Activated CD8-positive, alpha-beta T cell treated with anti-CD3 and anti-CD28 coated beads for 36 hours (primary cell): ENCODE measurements at regions of chr9 and their contacts with region 1.

Region 1: GRCh38 chr9:129737479-129738274 is 15.2 kb downstream of the PTGES start:
- DNase-seq: peak; percentile 89
- ATAC-seq: peak; percentile 89
- H3K4me3 Mint-ChIP-seq: peak overlapping the region; percentile 55
- H3K27ac Mint-ChIP-seq: peak overlapping the region; percentile 52
- H3K4me1 Mint-ChIP-seq: peaks cover 11% of the 10 kb centered on the region
- H3K27me3 Mint-ChIP-seq: no peaks in the 10 kb centered on the region
- CTCF ChIP-seq: peak; percentile 99

Region 2: GRCh38 chr9:129696938-129697650 is 40.6 kb before region 1 on chr9:
- CTCF ChIA-PET with region 1: interaction called, 13 read pairs
- POLR2A ChIA-PET with region 1: no interaction called
- intact Hi-C with region 1: no loop called
- DNase-seq: peak; percentile 36
- ATAC-seq: peak; percentile 66
- H3K4me3 Mint-ChIP-seq: peak overlapping the region; percentile 49
- H3K27ac Mint-ChIP-seq: peak overlapping the region; percentile 81
- H3K4me1 Mint-ChIP-seq: peaks cover 5% of the 10 kb centered on the region
- H3K27me3 Mint-ChIP-seq: peaks cover 31% of the 10 kb centered on the region
- CTCF ChIP-seq: no peak

Region 3: DNA sequence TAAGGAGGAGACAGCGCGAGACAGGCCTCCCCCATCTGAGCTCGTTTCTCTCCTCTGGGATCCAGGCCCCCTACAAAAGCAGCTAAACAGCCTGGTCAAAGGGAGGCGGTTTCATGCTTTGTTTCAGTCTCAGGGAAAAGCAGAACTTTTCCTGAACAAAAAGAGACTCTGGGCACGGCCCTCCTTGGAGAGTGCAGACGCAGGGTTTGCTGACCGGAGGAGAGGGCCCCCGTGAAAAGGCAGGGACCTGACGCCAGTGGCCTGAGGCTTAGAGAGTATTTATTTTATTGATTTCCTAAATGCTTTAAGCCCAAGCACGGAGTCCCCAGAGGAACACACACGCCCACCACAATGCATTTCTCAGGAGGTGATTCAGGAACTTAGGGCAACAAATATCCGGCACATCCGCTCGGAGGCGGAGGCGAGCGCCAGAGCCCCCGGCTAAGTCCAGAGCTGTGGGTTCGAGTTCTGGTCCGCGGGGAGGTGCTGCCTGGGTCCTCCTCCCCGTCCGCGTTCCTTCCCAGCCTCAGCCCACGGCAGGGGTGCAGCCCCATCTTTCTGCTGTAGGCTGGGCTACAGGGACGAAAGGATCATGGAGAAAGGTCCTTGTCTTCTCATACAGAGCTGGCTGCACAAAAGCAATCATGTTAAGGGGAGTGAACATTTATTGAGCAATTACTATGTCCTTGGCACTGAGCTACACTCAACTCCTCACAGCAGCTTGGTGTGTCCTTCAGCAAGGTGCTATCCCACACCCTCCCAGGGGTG is 24.9 kb before region 1 on chr9:
- CTCF ChIA-PET with region 1: interaction called, 10 read pairs
- POLR2A ChIA-PET with region 1: no interaction called
- intact Hi-C with region 1: no loop called
- DNase-seq: peak; percentile 49
- ATAC-seq: peak; percentile 56
- H3K4me3 Mint-ChIP-seq: no peak overlapping the region
- H3K27ac Mint-ChIP-seq: no peak overlapping the region
- H3K4me1 Mint-ChIP-seq: peaks cover 20% of the 10 kb centered on the region
- H3K27me3 Mint-ChIP-seq: peaks cover 6% of the 10 kb centered on the region
- CTCF ChIP-seq: no peak

Region 4: GRCh38 chr9:129751826-129752801 is 14.4 kb after region 1 on chr9:
- CTCF ChIA-PET with region 1: interaction called, 29 read pairs
- POLR2A ChIA-PET with region 1: interaction called, 3 read pairs
- intact Hi-C with region 1: no loop called
- DNase-seq: no peak
- ATAC-seq: peak; percentile 11
- H3K4me3 Mint-ChIP-seq: peak overlapping the region; percentile 26
- H3K27ac Mint-ChIP-seq: no peak overlapping the region
- H3K4me1 Mint-ChIP-seq: peaks cover 14% of the 10 kb centered on the region
- H3K27me3 Mint-ChIP-seq: peaks cover 6% of the 10 kb centered on the region
- CTCF ChIP-seq: no peak

Region 5: DNA sequence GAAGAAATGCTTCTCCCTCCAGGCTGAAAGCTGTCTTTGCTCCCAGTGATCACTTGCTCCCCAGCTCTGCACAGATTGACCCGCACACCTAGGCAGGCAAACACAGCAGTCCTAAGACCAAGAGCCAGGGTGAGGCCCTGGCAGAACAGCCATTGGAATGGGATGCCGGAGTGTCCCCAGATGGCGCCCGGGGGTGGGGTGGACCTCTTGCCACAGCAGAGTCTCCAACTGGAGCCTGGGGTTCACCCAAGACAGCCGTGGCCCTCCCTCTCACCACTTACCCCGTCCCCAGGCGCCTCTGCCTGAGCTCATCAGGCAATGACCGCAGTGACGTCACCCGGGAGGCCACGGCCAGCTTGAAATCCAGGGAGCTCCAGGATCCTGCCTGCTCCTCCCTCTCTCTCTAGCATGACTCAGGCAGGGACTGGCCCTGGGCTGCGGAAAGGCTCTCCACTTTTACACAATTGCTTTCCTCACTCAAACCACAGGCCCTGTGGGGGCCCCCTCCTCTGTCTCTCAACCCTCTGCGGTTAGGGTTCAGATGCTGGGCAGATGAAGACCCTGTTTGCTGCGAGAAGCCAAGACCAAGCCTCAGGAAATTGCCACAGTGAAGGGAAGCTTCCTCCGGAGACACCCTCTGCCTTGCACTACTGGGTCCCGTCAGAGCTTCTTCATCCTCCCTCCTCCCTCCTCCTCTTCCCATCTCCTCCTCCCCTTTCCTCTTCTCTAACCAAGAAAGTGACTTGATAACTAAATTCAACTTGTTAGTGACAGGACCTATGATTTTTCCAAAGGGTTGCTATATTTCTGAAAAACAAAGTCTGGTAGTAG is 39.5 kb after region 1 on chr9:
- CTCF ChIA-PET with region 1: interaction called, 82 read pairs
- POLR2A ChIA-PET with region 1: interaction called, 5 read pairs
- intact Hi-C with region 1: no loop called
- DNase-seq: peak; percentile 91
- ATAC-seq: peak; percentile 83
- H3K4me3 Mint-ChIP-seq: no peak overlapping the region
- H3K27ac Mint-ChIP-seq: no peak overlapping the region
- H3K4me1 Mint-ChIP-seq: peaks cover 15% of the 10 kb centered on the region
- H3K27me3 Mint-ChIP-seq: peaks cover 6% of the 10 kb centered on the region
- CTCF ChIP-seq: no peak

Region 6: GRCh38 chr9:129783516-129784361 is 46.1 kb after region 1 on chr9:
- CTCF ChIA-PET with region 1: interaction called, 82 read pairs
- POLR2A ChIA-PET with region 1: interaction called, 4 read pairs
- intact Hi-C with region 1: loop called (anchors 2 kb)
- DNase-seq: peak; percentile 79
- ATAC-seq: peak; percentile 99
- H3K4me3 Mint-ChIP-seq: no peak overlapping the region
- H3K27ac Mint-ChIP-seq: no peak overlapping the region
- H3K4me1 Mint-ChIP-seq: peaks cover 2% of the 10 kb centered on the region
- H3K27me3 Mint-ChIP-seq: no peaks in the 10 kb centered on the region
- CTCF ChIP-seq: peak; percentile 92

Region 7: DNA sequence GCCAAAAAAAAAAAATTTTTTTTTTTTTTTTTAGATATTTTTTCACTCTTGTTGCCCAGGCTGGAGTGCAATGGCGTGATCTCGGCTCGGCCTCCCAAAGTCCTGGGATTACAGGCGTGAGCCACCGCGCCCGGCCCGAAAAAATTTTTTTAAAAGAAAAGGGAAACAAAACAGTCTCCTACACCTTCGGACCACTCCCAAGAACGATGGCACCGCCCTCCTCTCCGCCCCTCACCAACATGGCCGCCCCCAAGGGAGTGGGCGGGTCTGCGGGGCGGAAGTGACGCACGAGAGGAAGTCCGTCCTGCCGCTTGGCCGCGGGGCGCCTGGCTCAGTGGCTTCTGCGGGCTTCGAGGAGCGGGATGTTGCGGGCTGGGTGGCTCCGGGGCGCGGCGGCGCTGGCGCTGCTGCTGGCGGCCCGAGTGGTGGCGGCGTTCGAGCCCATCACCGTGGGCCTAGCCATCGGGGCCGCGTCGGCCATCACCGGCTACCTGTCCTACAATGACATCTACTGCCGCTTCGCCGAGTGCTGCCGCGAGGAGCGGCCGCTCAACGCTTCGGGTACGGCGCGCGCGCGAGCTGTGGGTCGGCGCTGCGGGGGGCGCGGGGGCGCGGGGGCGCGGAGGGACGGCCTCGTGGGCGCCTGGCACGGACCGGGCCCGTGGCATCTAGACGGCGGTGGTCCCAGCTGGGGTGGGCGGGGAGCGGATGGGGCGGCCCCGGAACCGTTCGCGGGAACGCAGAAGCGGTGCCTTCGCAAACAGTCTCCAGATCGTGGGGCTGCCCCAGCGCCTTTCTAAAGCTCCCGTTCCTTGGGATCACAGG is 65.4 kb after region 1 on chr9 and contains the start of gene TOR1B:
- CTCF ChIA-PET with region 1: no interaction called
- POLR2A ChIA-PET with region 1: no interaction called
- intact Hi-C with region 1: no loop called
- DNase-seq: peak; percentile 96
- ATAC-seq: peak; percentile 94
- H3K4me3 Mint-ChIP-seq: peak within 1 kb of the TSS; percentile 83
- H3K27ac Mint-ChIP-seq: peak within 1 kb of the TSS; percentile 91
- H3K4me1 Mint-ChIP-seq: peaks cover 24% of the 10 kb centered on the region
- H3K27me3 Mint-ChIP-seq: no peaks in the 10 kb centered on the region
- CTCF ChIP-seq: no peak
- total RNA-seq, gene TOR1B: 18.5 to 19.8 TPM